ENCODE measurements at regions of chr22 and their contacts with region 1.

Region 1: DNA sequence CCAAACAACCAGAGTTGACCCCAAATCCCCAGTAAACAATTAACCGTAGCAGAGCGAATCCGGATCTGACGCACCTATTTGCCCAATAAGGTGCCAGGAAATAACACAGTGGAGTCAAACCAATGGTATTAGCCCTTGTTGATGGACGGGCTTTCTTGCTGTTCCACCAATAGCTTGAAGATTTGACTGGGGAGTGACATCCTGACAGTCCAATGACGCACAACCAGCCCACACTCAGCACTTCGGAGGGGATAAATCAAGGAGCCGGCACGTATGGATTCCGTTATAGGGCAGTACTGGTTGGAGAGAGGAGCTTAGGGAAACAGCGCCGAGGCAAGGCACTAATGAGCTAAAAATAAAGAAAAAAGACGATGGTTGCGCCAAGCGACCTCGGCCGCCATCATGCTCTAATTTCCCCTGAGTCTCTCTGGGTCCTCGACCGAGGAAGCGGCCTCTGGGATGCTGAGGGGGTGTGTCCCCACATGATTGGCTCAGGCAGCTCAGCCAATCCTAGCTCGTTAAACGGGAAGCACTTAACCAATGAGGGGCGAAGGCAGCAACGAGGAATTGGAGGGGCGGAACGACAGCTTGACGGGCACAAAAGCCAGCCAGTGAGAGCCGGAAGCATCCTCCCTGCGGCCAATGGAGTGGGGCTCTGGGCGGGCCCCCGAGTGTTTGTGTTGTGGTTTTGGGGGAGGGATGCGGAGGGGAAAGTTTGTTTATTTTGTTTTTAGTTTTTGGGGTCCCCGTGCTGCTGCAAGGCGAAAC is 49.5 kb downstream of the FAM83F start:
- DNase-seq: peak; percentile 98
- H3K4me3 ChIP-seq: peak overlapping the region; percentile 51 to 66 (median 55)
- H3K27ac ChIP-seq: peak overlapping the region; percentile 76 to 96 (median 91)
- H3K4me1 ChIP-seq: peaks cover 44 to 49% of the 10 kb centered on the region in 2 donors
- H3K27me3 ChIP-seq: no peaks in the 10 kb centered on the region
- CTCF ChIP-seq: no peak
- POLR2A ChIP-seq: peak in 1 of 2 donors; percentile 77

Region 2: GRCh38 chr22:40177738-40178416 is 133.6 kb after region 1 on chr22 and contains the start of gene TNRC6B:
- intact Hi-C with region 1: loop called (anchors 5 kb)
- DNase-seq: peak; percentile 74 to 77
- H3K4me3 ChIP-seq: peak within 1 kb of the TSS in 2 of 3 donors; percentile 29 to 64
- H3K27ac ChIP-seq: peak within 1 kb of the TSS; percentile 65 to 72 (median 70)
- H3K4me1 ChIP-seq: peaks cover 41 to 45% of the 10 kb centered on the region in 2 donors
- H3K27me3 ChIP-seq: no peaks in the 10 kb centered on the region
- CTCF ChIP-seq: peak in 1 of 6 experiments; percentile 18
- POLR2A ChIP-seq: peak in 1 of 2 donors; percentile 95
- total RNA-seq, gene TNRC6B: 46.1 to 202 (median 114) TPM

Region 3: DNA sequence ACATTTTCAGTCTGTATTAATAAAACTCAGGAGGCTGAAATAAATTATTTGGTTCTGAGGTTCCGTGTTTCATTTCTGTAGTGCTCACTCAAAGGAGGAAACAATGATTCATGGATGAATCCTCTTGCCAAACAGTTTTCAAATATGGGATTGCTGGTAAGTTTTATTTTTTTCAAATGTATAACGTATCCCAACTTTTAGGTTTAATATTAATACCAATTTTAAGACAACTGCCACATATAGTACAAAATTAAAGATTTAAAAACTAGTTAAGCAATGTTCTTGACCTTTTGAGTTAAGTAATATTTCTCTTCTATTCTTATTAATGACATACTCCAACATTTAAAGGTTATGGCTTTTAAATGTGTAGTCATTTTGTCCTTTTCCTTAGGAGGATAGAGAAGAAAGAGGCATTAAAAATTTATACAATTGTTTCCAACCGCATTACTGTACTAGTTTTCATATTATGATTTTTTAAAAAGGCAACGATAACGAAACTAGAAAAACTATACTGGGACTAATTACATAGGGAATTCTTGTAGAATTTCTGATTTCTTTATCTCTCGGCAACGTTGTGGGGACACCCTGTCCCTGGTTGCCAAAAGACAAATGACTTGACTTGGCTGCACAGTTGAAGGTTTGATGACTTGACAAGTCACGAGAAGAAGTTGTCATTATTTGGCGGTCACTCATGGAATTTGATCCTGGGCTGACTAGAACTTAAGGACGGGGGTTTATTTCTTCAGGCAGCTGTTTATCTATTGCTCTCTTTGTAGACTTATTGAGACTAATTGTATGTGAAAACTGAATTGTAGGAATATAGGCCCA is 232.9 kb after region 1 on chr22:
- intact Hi-C with region 1: no loop called
- DNase-seq: no peak
- H3K4me3 ChIP-seq: no peak overlapping the region
- H3K27ac ChIP-seq: peak overlapping the region; percentile 72 to 87 (median 86)
- H3K4me1 ChIP-seq: peaks cover 10 to 18% of the 10 kb centered on the region in 2 donors
- H3K27me3 ChIP-seq: no peaks in the 10 kb centered on the region
- CTCF ChIP-seq: no peak
- POLR2A ChIP-seq: no peak

Region 4: DNA sequence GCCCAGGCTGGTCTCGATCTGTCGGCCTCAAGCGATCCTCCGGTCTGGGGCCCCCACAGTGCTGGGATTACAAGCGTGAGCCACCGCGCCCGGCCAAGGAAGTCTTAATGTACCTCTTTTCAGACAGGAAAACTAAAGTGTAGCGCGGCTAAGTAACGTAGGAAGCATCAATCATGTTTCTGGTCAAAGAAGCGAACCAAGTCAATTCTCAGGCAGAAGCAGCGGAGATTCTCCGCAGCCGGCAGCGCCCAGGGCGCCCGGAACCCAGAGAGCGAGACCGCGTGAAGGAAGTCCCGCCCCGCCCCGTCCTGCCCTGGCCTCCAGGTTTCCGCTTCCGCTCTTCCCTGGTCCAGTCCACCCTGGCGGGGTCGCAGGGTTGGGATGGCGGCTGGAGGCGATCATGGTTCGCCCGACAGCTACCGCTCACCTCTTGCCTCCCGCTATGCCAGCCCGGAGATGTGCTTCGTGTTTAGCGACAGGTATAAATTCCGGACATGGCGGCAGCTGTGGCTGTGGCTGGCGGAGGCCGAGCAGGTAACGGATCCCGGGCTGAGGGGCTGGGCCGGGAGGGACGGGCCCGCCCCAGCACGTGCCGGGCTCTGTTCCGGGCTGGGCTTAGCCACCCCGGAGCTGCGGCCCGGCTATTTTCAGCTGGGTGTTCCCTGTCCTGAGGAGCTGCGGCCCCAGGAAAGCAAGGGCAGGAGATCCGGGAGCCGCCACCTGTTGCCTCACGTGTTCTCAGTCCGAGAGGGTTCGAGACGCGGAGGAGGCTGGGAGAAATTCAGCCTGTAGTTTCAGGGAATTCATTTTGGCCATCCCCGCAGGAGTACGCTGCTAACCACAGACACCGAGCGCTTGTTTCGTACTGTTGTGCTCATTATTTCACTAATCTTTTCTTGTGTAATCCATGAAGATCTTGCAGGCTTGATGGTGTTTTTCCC is 302.2 kb after region 1 on chr22 and contains the start of gene ADSL:
- intact Hi-C with region 1: loop called (anchors 5 kb)
- DNase-seq: peak; percentile 87 to 89
- H3K4me3 ChIP-seq: peak within 1 kb of the TSS; percentile 42 to 62 (median 57)
- H3K27ac ChIP-seq: peak within 1 kb of the TSS; percentile 37 to 60 (median 59)
- H3K4me1 ChIP-seq: peaks cover 15 to 22% of the 10 kb centered on the region in 2 donors
- H3K27me3 ChIP-seq: no peaks in the 10 kb centered on the region
- CTCF ChIP-seq: peak in 3 of 6 experiments; percentile 14 to 17 (median 15)
- POLR2A ChIP-seq: peak in 1 of 2 donors; percentile 78
- total RNA-seq, gene ADSL: 49.0 to 69.4 (median 60.1) TPM

Region 5: GRCh38 chr22:40499187-40499753 is 455.0 kb after region 1 on chr22:
- intact Hi-C with region 1: no loop called
- DNase-seq: no peak
- H3K4me3 ChIP-seq: no peak overlapping the region
- H3K27ac ChIP-seq: peak overlapping the region; percentile 19 to 41 (median 30)
- H3K4me1 ChIP-seq: peaks cover 6 to 12% of the 10 kb centered on the region in 2 donors
- H3K27me3 ChIP-seq: no peaks in the 10 kb centered on the region
- CTCF ChIP-seq: no peak
- POLR2A ChIP-seq: no peak